AG04449 (cell line): ENCODE measurements at regions of chr1 and their contacts with region 1.

Region 1: DNA sequence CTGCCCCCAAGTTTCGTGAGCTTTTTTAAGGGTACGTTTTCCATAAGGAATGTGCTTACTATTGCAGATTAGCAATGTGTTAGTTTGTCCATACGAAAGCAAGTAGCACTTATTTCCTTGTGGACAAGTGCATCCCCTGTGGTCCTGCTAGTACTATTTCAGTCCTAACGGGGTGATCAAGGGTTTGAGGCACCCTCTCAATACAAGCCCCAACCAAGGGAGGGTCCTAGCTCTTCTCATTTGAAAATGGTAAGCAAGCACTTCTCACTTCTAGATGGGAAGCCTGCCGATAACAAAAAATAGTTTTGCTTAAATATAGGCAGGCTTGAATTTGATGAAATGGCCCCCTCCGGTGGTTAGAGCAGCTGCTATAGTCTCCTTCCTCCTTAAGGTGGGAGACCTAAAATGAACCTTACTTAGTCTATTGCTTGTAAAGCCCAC is 64.0 kb upstream of the HMCN1 start:
- DNase-seq: no peak
- H3K4me3 ChIP-seq: no peak overlapping the region
- CTCF ChIP-seq: peak; percentile 48

Region 2: GRCh38 chr1:184982002-184982954 is 687.9 kb before region 1 on chr1:
- CTCF ChIA-PET with region 1: interaction called, 17 read pairs
- POLR2A ChIA-PET with region 1: no interaction called
- DNase-seq: no peak
- H3K4me3 ChIP-seq: no peak overlapping the region
- CTCF ChIP-seq: peak; percentile 89

Region 3: GRCh38 chr1:185238447-185238846 is 431.8 kb before region 1 on chr1:
- CTCF ChIA-PET with region 1: interaction called, 49 read pairs
- POLR2A ChIA-PET with region 1: no interaction called
- DNase-seq: no peak
- H3K4me3 ChIP-seq: no peak overlapping the region
- CTCF ChIP-seq: peak; percentile 26

Region 4: DNA sequence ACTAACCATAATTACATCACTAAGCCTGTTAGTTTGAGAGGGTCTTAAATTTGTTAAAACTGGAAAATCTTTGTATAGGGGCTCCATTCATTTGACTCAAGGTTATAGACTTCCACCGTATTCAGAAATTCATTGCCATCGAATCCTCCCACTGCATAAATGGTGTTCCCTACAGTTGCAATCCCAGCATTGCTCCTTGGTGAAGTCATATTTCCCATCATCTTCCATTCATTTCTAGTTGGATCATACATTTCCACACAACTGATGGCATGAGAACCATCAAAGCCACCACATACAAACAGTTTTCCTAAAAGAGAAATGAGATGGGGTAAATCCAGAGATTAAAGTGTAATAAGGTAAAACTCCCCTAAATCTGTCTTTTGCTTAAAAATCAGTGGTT is 372.2 kb before region 1 on chr1:
- CTCF ChIA-PET with region 1: interaction called, 21 read pairs
- POLR2A ChIA-PET with region 1: no interaction called
- DNase-seq: no peak
- H3K4me3 ChIP-seq: no peak overlapping the region
- CTCF ChIP-seq: no peak

Region 5: DNA sequence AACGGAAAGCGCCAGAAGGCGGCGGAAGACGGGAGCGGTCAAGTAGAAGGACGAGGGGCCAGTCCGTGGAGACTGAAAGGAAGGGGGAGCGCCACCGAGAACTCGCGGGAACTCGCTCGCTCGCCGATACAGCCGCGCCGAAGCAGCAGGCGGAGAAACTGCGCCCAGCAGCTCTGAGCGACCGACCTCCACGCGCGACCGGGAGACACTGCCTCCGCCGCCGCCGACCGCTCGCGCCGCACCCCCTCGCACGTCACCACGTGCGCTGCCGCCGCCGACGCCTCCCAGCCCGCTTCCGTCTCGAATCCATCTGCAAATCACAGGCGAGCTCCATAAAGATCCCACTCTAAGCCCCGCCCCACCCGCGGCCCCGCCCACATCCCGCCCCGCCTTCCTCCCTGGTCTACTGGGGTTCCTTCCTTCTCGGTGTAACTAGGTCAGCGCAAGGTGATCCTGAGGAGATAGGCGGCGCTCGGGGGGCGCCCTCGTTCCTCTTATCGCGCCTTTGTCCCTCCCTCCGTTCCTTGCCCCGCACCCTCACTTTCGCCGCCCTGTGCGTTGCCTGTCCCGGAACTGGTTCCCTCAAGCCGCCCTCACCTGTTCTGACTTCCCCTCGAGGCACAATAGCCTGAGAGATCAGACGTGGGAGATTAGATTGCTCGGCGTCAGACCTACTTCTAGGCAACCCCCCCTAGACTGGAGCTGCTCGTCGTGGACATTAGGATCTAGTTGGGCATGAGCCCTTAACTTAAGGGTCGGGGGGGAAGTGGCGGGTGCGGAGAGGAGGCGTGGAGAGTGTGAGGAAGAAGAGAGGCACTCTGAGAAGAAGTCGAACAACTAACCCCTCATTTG is 352.9 kb before region 1 on chr1 and contains the start of gene IVNS1ABP:
- CTCF ChIA-PET with region 1: interaction called, 26 read pairs
- POLR2A ChIA-PET with region 1: interaction called, 5 read pairs
- DNase-seq: peak; percentile 54
- H3K4me3 ChIP-seq: peak within 1 kb of the TSS; percentile 90
- CTCF ChIP-seq: peak; percentile 19

Region 6: GRCh38 chr1:185559684-185560331 is 110.4 kb before region 1 on chr1:
- CTCF ChIA-PET with region 1: interaction called, 12 read pairs
- POLR2A ChIA-PET with region 1: no interaction called
- DNase-seq: no peak
- H3K4me3 ChIP-seq: no peak overlapping the region
- CTCF ChIP-seq: peak; percentile 58

Region 7: GRCh38 chr1:185646202-185646683 is 24.0 kb before region 1 on chr1:
- CTCF ChIA-PET with region 1: interaction called, 13 read pairs
- POLR2A ChIA-PET with region 1: no interaction called
- DNase-seq: peak; percentile 97
- H3K4me3 ChIP-seq: no peak overlapping the region
- CTCF ChIP-seq: no peak